ENCODE measurements at regions of chr12 and their contacts with region 1.

Region 1: GRCh38 chr12:18139989-18140596 is 50.1 kb upstream of the RERGL start:
- DNase-seq: peak; percentile 4
- ATAC-seq: no peak
- H3K4me3 ChIP-seq: no peak overlapping the region
- H3K27ac ChIP-seq: no peak overlapping the region
- H3K4me1 ChIP-seq: no peaks in the 10 kb centered on the region
- H3K27me3 ChIP-seq: no peaks in the 10 kb centered on the region
- CTCF ChIP-seq: peak; percentile 29; the same call in 1 of the 2 replicates
- EP300 ChIP-seq: no peak
- POLR2A ChIP-seq: no peak
- RAD21 ChIP-seq: no peak

Region 2: GRCh38 chr12:18224745-18225144 is 84.7 kb after region 1 on chr12:
- CTCF ChIA-PET with region 1: interaction called, 6 read pairs
- POLR2A ChIA-PET with region 1: no interaction called
- in situ Hi-C with region 1: no loop called
- intact Hi-C with region 1: loop called (anchors 2 kb)
- DNase-seq: peak; percentile 21
- ATAC-seq: no peak
- H3K4me3 ChIP-seq: no peak overlapping the region
- H3K27ac ChIP-seq: no peak overlapping the region
- H3K4me1 ChIP-seq: no peaks in the 10 kb centered on the region
- H3K27me3 ChIP-seq: no peaks in the 10 kb centered on the region
- CTCF ChIP-seq: peak; percentile 45
- EP300 ChIP-seq: no peak
- POLR2A ChIP-seq: no peak
- RAD21 ChIP-seq: no peak

Region 3: DNA sequence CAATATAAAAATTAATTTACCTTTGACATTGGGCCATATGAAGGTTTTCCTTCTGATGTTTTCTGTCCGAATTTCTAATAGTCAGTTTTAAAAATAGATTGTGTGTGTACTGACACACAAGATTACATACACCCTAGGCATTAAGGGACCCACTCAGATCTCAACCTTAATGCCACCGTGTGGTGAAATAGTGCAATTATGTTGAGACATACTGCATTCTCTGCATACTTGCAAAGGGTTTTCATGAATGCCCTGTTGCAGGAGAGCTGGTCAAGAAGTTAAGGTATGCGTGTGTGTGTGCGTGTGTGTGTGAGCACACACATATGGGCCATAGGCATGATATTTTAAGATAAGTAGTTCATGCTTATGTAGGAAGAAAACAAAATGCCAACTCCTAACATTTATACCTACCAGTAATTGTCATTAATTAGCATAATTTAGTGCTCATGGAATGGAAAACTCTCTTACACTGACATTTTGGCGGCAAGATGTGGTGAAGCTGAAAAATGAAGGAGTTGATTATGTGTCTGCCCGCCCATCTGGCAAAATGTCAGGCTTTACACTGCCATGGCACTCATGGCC is 180.0 kb after region 1 on chr12:
- CTCF ChIA-PET with region 1: interaction called, 9 read pairs
- POLR2A ChIA-PET with region 1: no interaction called
- in situ Hi-C with region 1: loop called (anchors 10 kb)
- intact Hi-C with region 1: loop called (anchors 1 kb)
- DNase-seq: peak; percentile 74
- ATAC-seq: peak; percentile 99
- H3K4me3 ChIP-seq: no peak overlapping the region
- H3K27ac ChIP-seq: no peak overlapping the region
- H3K4me1 ChIP-seq: no peaks in the 10 kb centered on the region
- H3K27me3 ChIP-seq: no peaks in the 10 kb centered on the region
- CTCF ChIP-seq: peak; percentile 73
- EP300 ChIP-seq: no peak
- POLR2A ChIP-seq: no peak
- RAD21 ChIP-seq: 0 out of 2 replicates have a peak, but pooled peaks have one; percentile 28

Region 4: DNA sequence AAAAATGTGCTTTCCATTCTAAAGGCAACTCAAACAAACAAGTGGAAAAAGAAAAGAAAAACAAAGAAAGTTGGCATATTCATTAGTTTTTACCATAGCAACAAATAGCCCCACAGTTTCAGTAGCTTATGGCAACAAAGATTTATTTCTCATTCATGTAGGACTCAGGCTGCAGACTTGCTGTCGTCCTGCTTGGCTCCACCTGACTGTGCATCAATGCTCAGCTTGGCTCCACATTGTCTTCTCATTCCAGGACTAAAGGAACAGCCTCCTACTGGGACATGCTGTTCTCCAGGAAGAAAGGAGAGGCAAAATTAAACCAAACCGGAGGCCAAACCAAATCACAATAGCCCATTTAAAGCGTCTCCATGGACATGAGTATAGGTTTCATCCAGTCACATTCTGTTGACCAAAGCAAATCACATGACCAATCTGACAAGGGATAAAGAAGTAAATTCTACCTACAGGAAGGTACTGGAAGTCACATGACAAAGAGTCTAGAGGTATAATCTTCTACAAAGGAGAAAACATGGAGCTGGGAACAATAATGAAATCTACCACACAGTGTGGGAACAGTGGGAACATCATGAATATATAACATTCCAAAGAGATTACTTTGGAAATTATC is 343.7 kb after region 1 on chr12:
- CTCF ChIA-PET with region 1: no interaction called
- POLR2A ChIA-PET with region 1: no interaction called
- in situ Hi-C with region 1: no loop called
- intact Hi-C with region 1: no loop called
- DNase-seq: no peak
- ATAC-seq: no peak
- H3K4me3 ChIP-seq: no peak overlapping the region
- H3K27ac ChIP-seq: no peak overlapping the region
- H3K4me1 ChIP-seq: no peaks in the 10 kb centered on the region
- H3K27me3 ChIP-seq: no peaks in the 10 kb centered on the region
- CTCF ChIP-seq: no peak
- EP300 ChIP-seq: no peak
- POLR2A ChIP-seq: no peak
- RAD21 ChIP-seq: no peak